MCF 10A (cell line): ENCODE measurements at regions of chr3 and their contacts with region 1.

Region 1: GRCh38 chr3:49786241-49786958 is at the start of gene IP6K1:
- DNase-seq: peak; percentile 100
- H3K4me3 Mint-ChIP-seq: peak within 1 kb of the TSS; percentile 84
- H3K27ac Mint-ChIP-seq: peak within 1 kb of the TSS; percentile 97
- H3K4me1 Mint-ChIP-seq: no peaks in the 10 kb centered on the region
- H3K27me3 Mint-ChIP-seq: no peaks in the 10 kb centered on the region
- CTCF ChIP-seq: no peak
- total RNA-seq, gene IP6K1: 43.4 and 44.8 TPM in 2 replicates

Region 2: GRCh38 chr3:49775538-49775937 is 10.9 kb before region 1 on chr3:
- CTCF ChIA-PET with region 1: no interaction called
- POLR2A ChIA-PET with region 1: interaction called, 19 read pairs
- intact Hi-C with region 1: no loop called
- DNase-seq: no peak
- H3K4me3 Mint-ChIP-seq: no peak overlapping the region
- H3K27ac Mint-ChIP-seq: no peak overlapping the region
- H3K4me1 Mint-ChIP-seq: peaks cover 8% of the 10 kb centered on the region
- H3K27me3 Mint-ChIP-seq: no peaks in the 10 kb centered on the region
- CTCF ChIP-seq: no peak